Activated T-helper 1 cell treated with anti-CD3 and anti-CD28 coated beads, Interleukin-12 subunit alpha, Interleukin-12 subunit beta, Interleukin-2, Interleukin-4 antibody, amounts not matched to agents 30 ng/mL and 10 ng/mL and 1 ng/mL, durations not matched to agents 14 hours and 24 hours and 36 hours (primary cell): ENCODE measurements at regions of chr12 and their contacts with region 1.

Region 1: DNA sequence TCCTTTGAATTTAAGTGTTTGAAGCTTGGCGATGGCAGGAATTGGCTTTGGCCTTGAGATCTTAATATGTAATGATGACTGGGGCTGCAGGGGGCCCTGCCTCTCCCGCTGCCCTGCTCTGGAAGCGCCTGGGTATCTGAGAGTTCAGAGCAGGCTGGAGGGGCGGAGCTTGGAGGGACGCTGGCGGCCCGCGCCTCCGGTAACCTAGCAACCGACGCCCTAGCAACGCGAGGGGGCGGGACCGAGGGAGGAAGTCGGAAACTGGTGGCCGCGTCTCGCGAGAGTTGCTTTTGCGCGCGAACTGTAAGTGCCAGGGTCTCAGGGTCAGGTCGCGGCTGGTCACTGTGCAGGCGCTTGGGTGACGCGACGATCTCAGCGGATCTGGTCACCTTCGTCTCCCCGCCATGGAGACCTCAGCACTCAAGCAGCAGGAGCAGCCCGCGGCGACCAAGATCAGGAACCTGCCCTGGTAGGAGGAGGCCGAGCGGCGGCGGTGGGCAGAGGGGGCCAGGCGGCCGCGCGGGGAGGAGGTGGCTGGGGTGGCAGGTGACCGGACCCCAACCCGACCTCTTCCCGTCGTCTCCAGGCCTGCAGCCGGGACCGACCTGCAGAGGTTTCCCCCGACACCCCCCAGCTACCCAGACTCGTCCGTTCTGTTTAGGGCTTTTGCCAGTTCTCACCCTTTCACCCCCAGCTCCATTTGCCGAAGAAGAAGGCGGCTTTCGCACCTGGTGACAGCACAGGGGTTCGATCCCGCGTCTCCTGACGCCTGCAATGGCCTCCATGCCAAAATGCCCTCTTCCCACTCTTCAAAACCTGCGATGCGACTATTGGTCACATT is at the start of gene RFC5:
- DNase-seq: peak; percentile 96
- H3K4me3 Mint-ChIP-seq: peak within 1 kb of the TSS; percentile 98
- H3K27ac Mint-ChIP-seq: peak within 1 kb of the TSS; percentile 94
- H3K4me1 Mint-ChIP-seq: peaks cover 29% of the 10 kb centered on the region
- H3K27me3 Mint-ChIP-seq: peaks cover 10% of the 10 kb centered on the region
- total RNA-seq, gene RFC5: 73.8 and 87.0 TPM in 2 replicates

Region 2: GRCh38 chr12:117596968-117597367 is 419.7 kb before region 1 on chr12:
- intact Hi-C with region 1: no loop called
- DNase-seq: no peak
- H3K4me3 Mint-ChIP-seq: no peak overlapping the region
- H3K27ac Mint-ChIP-seq: no peak overlapping the region
- H3K4me1 Mint-ChIP-seq: no peaks in the 10 kb centered on the region
- H3K27me3 Mint-ChIP-seq: no peaks in the 10 kb centered on the region

Region 3: DNA sequence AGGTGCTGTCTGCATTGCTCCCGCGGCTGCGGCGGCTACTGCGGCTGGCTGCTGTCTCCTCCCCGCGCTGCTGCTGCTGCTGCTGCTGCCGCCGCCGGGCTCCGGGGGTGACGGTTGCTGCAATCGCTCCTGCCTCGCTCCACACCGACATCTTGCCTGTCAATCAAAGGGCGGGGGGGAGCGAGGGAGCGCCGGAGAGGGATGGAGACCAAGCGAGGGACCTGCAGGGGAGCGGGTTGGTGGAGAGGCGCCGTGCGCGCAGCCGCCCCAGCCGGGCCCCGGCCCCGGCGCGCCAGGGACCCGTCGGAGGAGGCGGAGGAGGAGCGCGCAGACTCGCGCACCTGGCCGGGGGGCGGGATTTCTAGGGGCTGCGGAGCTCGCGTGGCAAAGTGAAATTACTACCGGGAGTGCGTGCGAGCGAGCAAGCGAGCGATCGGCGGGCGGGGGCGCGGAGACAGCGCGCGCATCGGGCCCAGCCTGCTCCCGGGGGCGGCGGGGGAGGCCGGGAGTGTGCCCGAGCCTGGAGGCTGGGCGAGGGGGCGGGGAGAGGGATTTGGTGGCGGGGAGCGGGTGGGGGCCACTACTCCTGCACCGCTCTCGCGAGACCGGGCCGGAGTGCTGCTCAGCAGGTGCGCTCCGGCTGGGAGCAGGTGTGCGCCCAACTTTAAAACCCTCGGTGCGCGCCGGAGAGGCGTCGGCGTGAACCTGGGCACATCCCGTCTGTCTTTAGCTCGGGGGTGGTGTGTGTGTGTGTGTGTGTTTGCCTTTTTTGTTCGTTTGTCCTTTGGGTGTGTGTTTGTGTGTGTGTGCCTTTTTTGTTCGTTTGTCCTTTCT is 47.6 kb before region 1 on chr12 and contains the start of gene KSR2:
- intact Hi-C with region 1: loop called (anchors 2 kb)
- DNase-seq: peak; percentile 15
- H3K4me3 Mint-ChIP-seq: peak within 1 kb of the TSS; percentile 80
- H3K27ac Mint-ChIP-seq: peak within 1 kb of the TSS; percentile 64
- H3K4me1 Mint-ChIP-seq: peaks cover 6% of the 10 kb centered on the region
- H3K27me3 Mint-ChIP-seq: peaks cover 46% of the 10 kb centered on the region
- total RNA-seq, gene KSR2: 0.02 and 0.08 TPM in 2 replicates

Region 4: DNA sequence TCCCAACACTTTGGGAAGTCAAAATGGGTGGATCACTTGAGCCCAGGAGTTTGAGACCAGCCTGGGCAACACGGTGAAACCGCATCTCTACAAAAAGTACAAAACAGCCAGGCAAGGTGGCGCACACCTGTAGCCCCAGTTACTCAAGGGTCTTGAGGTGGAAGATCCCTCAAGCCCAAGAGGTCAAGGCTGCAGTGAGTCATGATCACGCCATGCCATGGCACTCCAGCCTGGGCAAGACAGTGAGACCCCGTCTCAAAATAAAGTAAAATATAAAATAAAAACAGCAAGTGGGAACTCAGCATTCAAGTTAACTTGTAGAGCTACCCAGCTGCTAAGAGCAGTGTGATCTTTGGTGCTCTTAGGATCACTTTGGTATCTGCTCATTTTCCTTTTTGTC is 12.5 kb after region 1 on chr12:
- intact Hi-C with region 1: no loop called
- DNase-seq: no peak
- H3K4me3 Mint-ChIP-seq: no peak overlapping the region
- H3K27ac Mint-ChIP-seq: peak overlapping the region; percentile 64
- H3K4me1 Mint-ChIP-seq: peaks cover 22% of the 10 kb centered on the region
- H3K27me3 Mint-ChIP-seq: no peaks in the 10 kb centered on the region

Region 5: DNA sequence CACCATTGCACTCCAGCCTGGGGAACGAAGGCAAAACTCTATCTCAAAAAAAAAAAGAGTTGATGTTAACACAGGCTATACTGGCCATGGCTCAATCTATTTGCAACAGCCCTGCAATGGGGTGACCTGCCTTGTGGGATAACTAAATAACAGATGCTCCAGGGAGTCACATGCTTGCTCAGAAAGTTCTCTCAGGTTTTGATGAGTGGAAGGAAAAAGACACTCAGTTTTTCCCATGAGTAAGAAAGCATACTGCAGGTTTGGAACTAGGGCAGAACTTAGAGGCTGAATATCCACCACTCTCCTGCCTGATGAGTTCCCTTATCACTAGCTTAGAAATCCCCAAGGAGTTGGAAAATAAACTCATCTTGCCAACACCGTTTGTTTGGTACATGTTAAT is 27.4 kb after region 1 on chr12:
- intact Hi-C with region 1: loop called (anchors 1 kb)
- DNase-seq: no peak
- H3K4me3 Mint-ChIP-seq: peak overlapping the region; percentile 72
- H3K27ac Mint-ChIP-seq: peak overlapping the region; percentile 95
- H3K4me1 Mint-ChIP-seq: peaks cover 47% of the 10 kb centered on the region
- H3K27me3 Mint-ChIP-seq: no peaks in the 10 kb centered on the region

Region 6: GRCh38 chr12:118061011-118061875 is 44.6 kb after region 1 on chr12 and contains the start of gene WSB2:
- intact Hi-C with region 1: loop called (anchors 1 kb)
- DNase-seq: peak; percentile 48
- H3K4me3 Mint-ChIP-seq: peak within 1 kb of the TSS; percentile 92
- H3K27ac Mint-ChIP-seq: peak within 1 kb of the TSS; percentile 94
- H3K4me1 Mint-ChIP-seq: peaks cover 55% of the 10 kb centered on the region
- H3K27me3 Mint-ChIP-seq: no peaks in the 10 kb centered on the region
- total RNA-seq, gene WSB2: 122 and 127 TPM in 2 replicates